AG04450 (cell line): ENCODE measurements at regions of chr5 and their contacts with region 1.

Region 1: DNA sequence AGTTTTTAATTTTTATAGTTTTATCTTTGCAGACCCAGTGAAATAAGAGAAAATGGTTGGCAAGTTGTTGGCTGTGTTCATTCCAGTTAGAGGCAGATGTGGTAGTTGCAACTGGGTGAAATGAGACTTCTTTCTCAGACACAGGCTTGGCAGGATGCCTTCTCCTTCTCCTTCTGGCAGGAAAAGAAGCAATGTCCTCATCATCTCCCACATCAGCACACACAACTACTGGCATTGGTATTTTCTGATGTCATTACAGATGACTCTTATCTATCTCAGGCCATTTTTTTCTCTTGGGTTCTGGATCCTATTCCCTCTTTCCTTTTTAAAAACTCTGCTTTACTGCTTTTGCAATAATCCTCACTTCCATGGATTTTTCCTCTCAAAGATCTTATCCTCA is 103.3 kb upstream of the EDIL3 start:
- DNase-seq: peak; percentile 82
- H3K4me3 ChIP-seq: no peak overlapping the region
- H3K27ac ChIP-seq: no peak overlapping the region
- H3K27me3 ChIP-seq: no peaks in the 10 kb centered on the region
- CTCF ChIP-seq: no peak

Region 2: GRCh38 chr5:84578226-84578625 is 90.3 kb after region 1 on chr5:
- CTCF ChIA-PET with region 1: interaction called, 13 read pairs
- POLR2A ChIA-PET with region 1: no interaction called
- DNase-seq: no peak
- H3K4me3 ChIP-seq: no peak overlapping the region
- H3K27ac ChIP-seq: no peak overlapping the region
- H3K27me3 ChIP-seq: no peaks in the 10 kb centered on the region
- CTCF ChIP-seq: no peak